ENCODE measurements at regions of chr3 and their contacts with region 1.

Region 1: DNA sequence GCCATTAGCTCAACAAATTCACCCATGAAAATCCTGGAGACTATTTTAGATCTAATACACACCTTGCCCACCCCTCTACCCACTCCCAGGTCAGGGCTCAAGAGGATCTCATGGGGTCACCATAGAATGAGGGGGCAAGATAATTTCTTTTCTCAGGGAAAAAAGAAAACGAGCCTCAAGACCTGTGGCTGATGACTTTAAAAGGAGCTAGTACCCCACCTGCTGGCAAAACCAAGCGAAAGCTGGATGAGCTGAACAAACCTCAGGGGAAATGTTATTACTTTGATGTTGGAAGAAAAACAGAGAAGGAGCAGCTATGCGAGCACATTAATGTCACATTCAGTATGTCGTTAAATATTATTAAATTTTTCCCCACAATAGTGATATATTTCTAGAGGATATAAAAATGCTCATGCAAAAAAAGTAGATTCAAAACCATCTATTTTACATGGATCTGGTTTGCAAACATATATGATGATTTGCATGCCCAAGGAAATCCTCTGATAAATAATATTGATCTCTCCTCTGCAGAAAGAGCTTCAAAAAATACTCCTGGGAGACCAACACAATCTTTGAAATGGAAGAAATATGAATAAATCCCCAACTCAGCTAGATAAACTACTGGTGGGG is 37.7 kb downstream of the PLD1 start:
- DNase-seq: peak in 1 of 3 donors; percentile 84
- ATAC-seq: peak; percentile 50
- H3K4me3 ChIP-seq: no peak overlapping the region
- H3K4me1 ChIP-seq: peaks cover 26% of the 10 kb centered on the region
- CTCF ChIP-seq: peak; percentile 38

Region 2: DNA sequence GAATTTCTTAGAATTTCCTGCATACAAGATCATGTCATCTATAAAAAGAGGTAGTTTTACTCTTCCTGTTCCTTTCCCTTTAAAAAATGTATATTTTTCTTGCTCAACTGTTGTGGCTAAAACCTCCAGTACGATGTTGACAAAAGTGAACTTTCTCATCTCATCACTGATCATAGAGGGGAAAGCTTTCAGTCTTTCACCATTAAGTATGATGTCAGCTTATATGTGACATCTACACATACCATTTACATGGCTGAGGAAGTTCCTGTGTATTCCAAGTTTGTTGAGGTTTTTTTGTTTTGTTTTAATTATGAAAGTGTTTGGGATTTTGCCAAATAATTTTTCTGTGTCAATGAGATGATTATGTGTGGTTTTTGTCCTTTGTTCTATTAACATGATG is 135.9 kb before region 1 on chr3:
- intact Hi-C with region 1: loop called in 1 of 2 experiments (anchors 5 kb)
- DNase-seq: no peak
- ATAC-seq: no peak
- H3K4me3 ChIP-seq: no peak overlapping the region
- H3K4me1 ChIP-seq: no peaks in the 10 kb centered on the region
- CTCF ChIP-seq: no peak

Region 3: GRCh38 chr3:171654809-171655208 is 117.7 kb before region 1 on chr3:
- intact Hi-C with region 1: loop called in 1 of 2 experiments (anchors 5 kb)
- DNase-seq: peak in 1 of 3 donors; percentile 47
- ATAC-seq: peak; percentile 22
- H3K4me3 ChIP-seq: no peak overlapping the region
- H3K4me1 ChIP-seq: no peaks in the 10 kb centered on the region
- CTCF ChIP-seq: no peak

Region 4: GRCh38 chr3:171829841-171830517 is 57.4 kb after region 1 on chr3:
- intact Hi-C with region 1: no loop called
- DNase-seq: peak; percentile 81 to 83 (median 83)
- ATAC-seq: peak; percentile 98
- H3K4me3 ChIP-seq: no peak overlapping the region
- H3K4me1 ChIP-seq: no peaks in the 10 kb centered on the region
- CTCF ChIP-seq: peak; percentile 54